Pancreas (tissue), 10 donors: ENCODE measurements at regions of chr2 and their contacts with region 1.

Region 1: DNA sequence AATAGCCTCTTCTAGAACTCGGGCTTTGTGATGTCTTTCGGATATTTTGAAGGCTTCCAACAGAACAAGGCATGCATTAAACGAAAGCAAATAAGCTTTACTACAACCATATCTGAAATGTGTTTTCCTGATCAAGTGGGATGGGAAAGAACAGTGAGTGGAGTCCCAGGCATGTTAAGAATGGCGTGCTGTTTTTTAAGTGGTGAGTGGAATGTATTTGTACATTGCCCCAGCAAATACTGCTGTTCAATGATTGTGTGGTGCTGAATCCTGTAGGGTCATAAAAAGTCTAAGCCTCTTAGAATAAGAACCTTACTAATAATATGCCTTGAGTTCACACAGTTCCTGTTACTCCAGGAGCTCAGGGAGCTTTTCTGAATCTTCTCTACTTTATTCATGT is 52.5 kb downstream of the POMC start:
- DNase-seq: no peak
- ATAC-seq: no peak
- H3K4me3 ChIP-seq: no peak overlapping the region
- H3K27ac ChIP-seq: no peak overlapping the region
- H3K4me1 ChIP-seq: no peaks in the 10 kb centered on the region
- H3K27me3 ChIP-seq: no peaks in the 10 kb centered on the region
- CTCF ChIP-seq: no peak

Region 2: DNA sequence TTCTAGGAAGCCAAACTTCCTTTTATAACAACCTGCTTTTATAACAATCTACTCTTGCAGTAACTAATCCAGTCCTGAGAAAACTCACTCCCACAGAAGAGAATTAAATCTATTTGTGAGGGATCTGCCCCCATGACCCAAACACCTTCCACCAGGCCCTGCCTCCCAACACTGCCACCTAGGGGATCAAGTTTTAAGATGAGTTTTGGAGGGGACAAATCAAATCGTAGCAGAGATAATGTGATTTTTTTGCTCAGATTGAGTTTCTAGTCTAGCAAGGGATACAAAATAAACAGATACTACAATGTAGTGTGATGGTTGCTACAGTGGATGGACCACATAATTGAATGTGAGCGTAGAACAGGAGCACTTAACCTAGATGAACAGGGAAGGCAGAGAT is 572.6 kb before region 1 on chr2:
- intact Hi-C with region 1: no loop called
- DNase-seq: no peak
- ATAC-seq: no peak
- H3K4me3 ChIP-seq: no peak overlapping the region
- H3K27ac ChIP-seq: no peak overlapping the region
- H3K4me1 ChIP-seq: no peaks in the 10 kb centered on the region
- H3K27me3 ChIP-seq: no peaks in the 10 kb centered on the region
- CTCF ChIP-seq: no peak

Region 3: DNA sequence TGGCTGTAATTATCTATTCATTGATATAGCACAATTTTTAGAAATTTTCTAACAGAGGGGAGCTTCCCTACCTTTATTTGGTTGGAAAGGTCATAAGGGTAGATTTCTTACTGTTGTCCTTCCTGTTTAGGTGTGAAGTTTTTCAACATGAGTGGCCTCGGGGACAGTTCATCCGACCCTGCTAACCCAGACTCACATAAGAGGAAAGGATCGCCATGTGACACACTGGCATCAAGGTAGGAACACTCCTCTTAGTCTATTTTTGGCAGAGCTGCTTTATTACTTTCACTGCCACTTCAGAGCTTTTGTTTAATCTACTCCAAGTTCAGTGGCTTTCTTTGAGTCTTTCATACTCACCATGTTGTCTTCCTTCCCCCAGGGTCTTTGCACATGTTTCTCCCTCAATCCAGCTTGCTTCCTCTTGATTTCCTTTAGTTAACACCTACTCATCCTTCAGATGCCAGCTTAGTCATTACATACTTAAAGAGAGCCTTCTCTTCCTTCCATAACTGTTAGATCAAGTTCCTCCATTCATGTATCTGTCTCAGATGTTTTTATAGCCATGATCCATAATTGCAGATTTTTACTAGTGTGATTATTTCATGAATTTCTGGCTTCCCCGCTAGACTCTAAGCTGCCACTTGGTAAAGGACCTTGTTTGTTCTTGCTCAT is 457.2 kb before region 1 on chr2:
- intact Hi-C with region 1: no loop called
- DNase-seq: no peak
- ATAC-seq: no peak
- H3K4me3 ChIP-seq: no peak overlapping the region
- H3K27ac ChIP-seq: no peak overlapping the region
- H3K4me1 ChIP-seq: peaks cover 0 to 5% (median 0%) of the 10 kb centered on the region in 3 donors
- H3K27me3 ChIP-seq: no peaks in the 10 kb centered on the region
- CTCF ChIP-seq: no peak

Region 4: GRCh38 chr2:25063876-25064660 is 51.8 kb before region 1 on chr2:
- intact Hi-C with region 1: loop called in 1 of 3 experiments (anchors 10 kb)
- DNase-seq: no peak
- ATAC-seq: no peak
- H3K4me3 ChIP-seq: no peak overlapping the region
- H3K27ac ChIP-seq: no peak overlapping the region
- H3K4me1 ChIP-seq: no peaks in the 10 kb centered on the region
- H3K27me3 ChIP-seq: no peaks in the 10 kb centered on the region
- CTCF ChIP-seq: no peak